Thyroid gland (tissue), 4 donors: ENCODE measurements at regions of chr6 and their contacts with region 1.

Region 1: GRCh38 chr6:148746363-148747144 is at the start of gene UST:
- DNase-seq: peak; percentile 95 to 97
- H3K4me3 ChIP-seq: peak within 1 kb of the TSS; percentile 78 to 90 (median 83)
- H3K27ac ChIP-seq: peak within 1 kb of the TSS; percentile 91 to 96 (median 94)
- H3K4me1 ChIP-seq: peaks cover 20 to 26% of the 10 kb centered on the region in 2 donors
- H3K27me3 ChIP-seq: no peaks in the 10 kb centered on the region
- CTCF ChIP-seq: peak in 5 of 6 experiments; percentile 43 to 74 (median 64)
- POLR2A ChIP-seq: peak; percentile 59 to 97
- total RNA-seq, gene UST: 73.4 to 91.2 (median 81.4) TPM

Region 2: GRCh38 chr6:148578245-148578732 is 168.3 kb before region 1 on chr6:
- intact Hi-C with region 1: loop called (anchors 10 kb)
- DNase-seq: peak; percentile 85 to 88
- H3K4me3 ChIP-seq: no peak overlapping the region
- H3K27ac ChIP-seq: no peak overlapping the region
- H3K4me1 ChIP-seq: peaks cover 0 to 4% of the 10 kb centered on the region in 2 donors
- H3K27me3 ChIP-seq: no peaks in the 10 kb centered on the region
- CTCF ChIP-seq: peak; percentile 55 to 97 (median 90)
- POLR2A ChIP-seq: no peak

Region 3: DNA sequence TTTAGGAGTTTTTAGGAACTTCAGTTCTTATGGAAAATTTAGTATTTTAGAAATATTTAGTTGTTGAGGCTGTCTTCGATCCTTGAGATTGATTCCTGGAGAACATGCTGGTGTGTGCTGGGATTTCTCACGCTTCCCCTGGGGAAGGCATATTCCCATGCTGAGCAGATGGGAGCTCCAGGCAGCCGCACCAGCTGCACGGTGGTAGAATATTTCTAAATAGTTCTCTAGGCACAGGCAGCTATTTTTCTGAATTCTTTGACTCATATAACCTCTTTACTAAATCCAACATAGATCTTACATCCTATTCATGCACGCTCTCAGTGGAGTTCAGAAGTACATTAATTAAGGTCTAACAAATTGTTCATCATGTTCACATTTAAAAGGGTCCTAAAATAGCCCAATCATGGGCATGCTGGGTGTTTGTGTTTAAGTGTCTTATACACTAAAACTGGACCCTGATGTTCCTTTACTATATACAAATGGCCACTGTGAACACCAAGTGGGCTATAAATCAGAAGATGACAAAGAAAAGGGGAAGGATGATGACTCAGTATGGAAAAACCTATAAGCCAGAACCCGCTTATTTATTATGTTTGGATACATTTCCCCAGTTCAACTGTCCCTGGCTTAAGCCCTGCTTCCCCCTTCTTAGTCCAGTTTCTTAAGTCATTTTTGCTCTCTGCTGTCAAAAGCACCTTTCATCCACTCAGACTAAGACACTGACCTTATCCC is 138.7 kb after region 1 on chr6:
- intact Hi-C with region 1: no loop called
- DNase-seq: no peak
- H3K4me3 ChIP-seq: no peak overlapping the region
- H3K27ac ChIP-seq: peak overlapping the region in 2 of 3 donors; percentile 37 to 55
- H3K4me1 ChIP-seq: peaks cover 53 to 66% of the 10 kb centered on the region in 2 donors
- H3K27me3 ChIP-seq: no peaks in the 10 kb centered on the region
- CTCF ChIP-seq: no peak
- POLR2A ChIP-seq: no peak

Region 4: GRCh38 chr6:148947621-148948444 is 201.3 kb after region 1 on chr6:
- intact Hi-C with region 1: loop called (anchors 5 kb)
- DNase-seq: peak; percentile 83 to 88
- H3K4me3 ChIP-seq: no peak overlapping the region
- H3K27ac ChIP-seq: peak overlapping the region in 1 of 3 donors; percentile 4
- H3K4me1 ChIP-seq: peaks cover 8 to 12% of the 10 kb centered on the region in 2 donors
- H3K27me3 ChIP-seq: no peaks in the 10 kb centered on the region
- CTCF ChIP-seq: peak; percentile 75 to 86 (median 80)
- POLR2A ChIP-seq: no peak